ENCODE measurements at regions of chr5 and their contacts with region 1.

Region 1: DNA sequence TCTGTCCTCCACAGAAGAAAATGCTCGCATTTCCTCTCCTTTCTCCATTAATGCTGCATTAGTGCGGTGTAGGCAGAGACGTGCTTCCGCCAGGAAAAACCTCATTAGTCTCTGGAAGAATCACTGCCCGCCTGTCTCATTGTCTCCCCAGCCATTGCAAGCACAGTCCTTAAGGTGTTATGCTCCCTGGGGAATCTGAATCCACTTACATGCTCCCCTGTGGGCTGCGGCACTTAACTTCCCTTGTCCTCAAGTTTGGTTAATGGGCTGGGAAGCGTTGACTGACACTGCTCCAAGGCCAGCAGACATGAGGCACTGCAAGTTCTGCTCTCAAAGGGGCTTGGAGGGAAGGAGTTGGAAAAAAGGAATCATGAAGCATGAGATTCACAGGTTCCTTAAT is 41.6 kb downstream of the TARS1 start:
- DNase-seq: no peak
- H3K4me3 ChIP-seq: no peak overlapping the region
- H3K27ac ChIP-seq: no peak overlapping the region
- H3K4me1 ChIP-seq: no peaks in the 10 kb centered on the region
- H3K27me3 ChIP-seq: no peaks in the 10 kb centered on the region
- CTCF ChIP-seq: no peak

Region 2: DNA sequence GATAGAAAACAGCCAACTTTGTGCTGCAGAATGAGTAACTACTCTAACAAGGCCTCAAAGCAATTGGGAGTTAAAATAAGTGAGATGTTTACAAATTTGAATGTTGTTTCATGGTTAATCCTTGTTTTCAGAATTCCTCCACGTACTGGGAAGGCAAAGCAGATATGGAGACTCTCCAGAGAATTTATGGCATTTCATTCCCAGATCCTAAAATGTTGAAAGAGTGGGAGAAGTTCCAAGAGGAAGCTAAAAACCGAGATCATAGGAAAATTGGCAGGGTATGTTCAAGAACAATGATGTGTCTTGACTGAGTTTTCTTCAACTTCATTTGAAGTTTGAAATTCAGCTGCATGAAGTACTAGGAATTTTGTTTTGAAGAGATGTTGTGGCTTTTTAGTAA is 25.2 kb before region 1 on chr5:
- CTCF ChIA-PET with region 1: no interaction called
- dilution Hi-C with region 1: no loop called
- in situ Hi-C with region 1: no loop called
- intact Hi-C with region 1: loop called (anchors 1 kb)
- DNase-seq: no peak
- H3K4me3 ChIP-seq: no peak overlapping the region
- H3K27ac ChIP-seq: no peak overlapping the region
- H3K4me1 ChIP-seq: peaks cover 9% of the 10 kb centered on the region
- H3K27me3 ChIP-seq: no peaks in the 10 kb centered on the region
- CTCF ChIP-seq: no peak

Region 3: GRCh38 chr5:33513462-33514185 is 31.3 kb after region 1 on chr5:
- CTCF ChIA-PET with region 1: no interaction called
- dilution Hi-C with region 1: no loop called
- in situ Hi-C with region 1: no loop called
- intact Hi-C with region 1: no loop called
- DNase-seq: no peak
- H3K4me3 ChIP-seq: no peak overlapping the region
- H3K27ac ChIP-seq: no peak overlapping the region
- H3K4me1 ChIP-seq: no peaks in the 10 kb centered on the region
- H3K27me3 ChIP-seq: no peaks in the 10 kb centered on the region
- CTCF ChIP-seq: no peak

Measured in mammary epithelial cell (primary cell).